AG04450 (cell line): ENCODE measurements at regions of chr11 and their contacts with region 1.

Region 1: GRCh38 chr11:112588252-112588694 is 327.6 kb upstream of the PLET1 start:
- DNase-seq: peak; percentile 54
- H3K4me3 ChIP-seq: no peak overlapping the region
- H3K27ac ChIP-seq: no peak overlapping the region
- H3K27me3 ChIP-seq: no peaks in the 10 kb centered on the region
- CTCF ChIP-seq: peak; percentile 67

Region 2: GRCh38 chr11:112289588-112290492 is 298.4 kb before region 1 on chr11:
- CTCF ChIA-PET with region 1: interaction called, 16 read pairs
- POLR2A ChIA-PET with region 1: no interaction called
- DNase-seq: no peak
- H3K4me3 ChIP-seq: peak overlapping the region; percentile 78
- H3K27ac ChIP-seq: no peak overlapping the region
- H3K27me3 ChIP-seq: no peaks in the 10 kb centered on the region
- CTCF ChIP-seq: peak; percentile 65

Region 3: GRCh38 chr11:112555491-112556364 is 32.5 kb before region 1 on chr11:
- CTCF ChIA-PET with region 1: interaction called, 21 read pairs
- POLR2A ChIA-PET with region 1: no interaction called
- DNase-seq: no peak
- H3K4me3 ChIP-seq: no peak overlapping the region
- H3K27ac ChIP-seq: peak overlapping the region; percentile 11
- H3K27me3 ChIP-seq: peaks cover 2% of the 10 kb centered on the region
- CTCF ChIP-seq: peak; percentile 78

Region 4: DNA sequence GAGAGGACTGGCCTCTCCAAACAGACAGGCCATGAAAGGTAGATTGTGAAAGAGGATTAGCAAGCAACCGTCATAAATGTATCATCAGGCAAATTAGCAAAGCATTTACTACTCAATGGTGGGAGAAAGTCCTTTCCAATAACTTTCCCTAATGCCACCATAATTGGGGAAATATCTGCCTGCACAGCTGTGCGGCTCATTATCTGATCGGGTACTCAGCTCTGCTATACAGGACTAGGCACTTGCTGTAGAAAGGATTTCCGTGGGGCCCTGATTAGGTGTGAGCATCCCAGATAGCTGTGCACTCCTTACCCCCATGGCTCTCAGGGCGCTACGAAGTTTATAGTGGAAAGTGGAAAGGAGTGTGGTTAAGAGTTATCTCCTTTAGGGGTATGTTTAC is 17.9 kb before region 1 on chr11:
- CTCF ChIA-PET with region 1: interaction called, 26 read pairs
- POLR2A ChIA-PET with region 1: no interaction called
- DNase-seq: no peak
- H3K4me3 ChIP-seq: no peak overlapping the region
- H3K27ac ChIP-seq: no peak overlapping the region
- H3K27me3 ChIP-seq: peaks cover 15% of the 10 kb centered on the region
- CTCF ChIP-seq: no peak

Region 5: DNA sequence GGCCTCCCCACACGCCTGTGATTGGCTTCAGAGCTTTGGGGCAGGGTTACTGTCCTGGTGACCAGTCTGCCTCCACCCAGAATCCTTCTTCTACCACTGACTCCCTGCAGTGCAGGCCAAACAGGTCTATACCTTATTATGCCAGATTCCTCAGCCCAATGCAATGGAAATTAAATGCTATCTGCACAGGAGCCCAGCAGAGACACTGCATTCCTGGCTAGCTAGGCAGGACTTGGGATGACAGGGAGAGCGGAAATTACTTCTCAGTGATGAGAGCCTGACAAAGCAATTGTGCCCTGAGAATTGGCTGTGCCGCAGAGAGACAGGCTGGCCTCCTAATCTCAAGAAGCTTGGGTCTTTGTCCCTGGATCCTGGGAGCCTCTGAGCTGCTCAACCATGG is 229.1 kb after region 1 on chr11:
- CTCF ChIA-PET with region 1: no interaction called
- POLR2A ChIA-PET with region 1: no interaction called
- DNase-seq: no peak
- H3K4me3 ChIP-seq: no peak overlapping the region
- H3K27ac ChIP-seq: no peak overlapping the region
- H3K27me3 ChIP-seq: no peaks in the 10 kb centered on the region
- CTCF ChIP-seq: no peak

Region 6: DNA sequence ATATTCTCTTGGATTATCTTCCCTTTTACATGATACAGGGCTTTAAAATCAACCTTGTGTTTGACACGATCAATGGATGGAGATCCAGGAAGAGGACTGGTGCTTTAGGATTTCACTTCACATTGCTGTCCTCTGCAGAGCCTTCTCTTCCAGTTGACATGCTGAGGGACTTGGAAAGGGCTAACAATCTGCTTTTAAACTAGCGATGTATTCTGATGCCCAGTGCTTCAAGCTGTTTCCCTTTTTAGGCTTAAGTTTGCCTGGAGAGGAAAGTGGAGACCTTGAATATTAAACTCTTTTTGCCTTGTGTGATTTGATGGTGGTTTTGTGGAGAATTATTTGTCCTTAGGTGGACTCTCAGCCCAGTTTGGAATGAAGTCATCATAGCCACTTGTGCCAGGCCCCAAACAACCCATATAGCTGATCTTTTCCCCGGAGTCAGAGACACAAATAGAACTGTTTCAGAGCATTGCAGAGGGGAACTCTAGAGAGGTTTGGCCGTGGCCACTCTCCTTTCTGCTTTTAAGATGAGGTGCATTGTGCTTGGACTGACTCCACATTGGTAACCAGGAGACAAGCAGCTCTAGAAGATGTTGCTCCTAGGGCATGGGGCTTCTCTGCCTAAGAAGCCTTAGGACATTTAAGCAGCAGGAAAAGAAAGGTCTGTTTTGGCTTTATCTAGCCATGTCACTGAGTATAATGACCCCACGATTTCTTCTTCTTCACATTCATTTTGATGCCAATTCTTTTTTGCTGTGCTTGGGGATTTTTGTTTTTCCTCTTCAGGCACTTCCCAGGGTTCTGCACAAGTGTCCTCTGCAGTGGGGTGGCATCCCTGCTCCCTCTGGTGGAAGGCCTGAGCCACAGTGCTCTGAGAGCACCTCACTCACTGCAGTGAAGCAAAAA is 525.8 kb after region 1 on chr11:
- CTCF ChIA-PET with region 1: interaction called, 16 read pairs
- POLR2A ChIA-PET with region 1: no interaction called
- DNase-seq: no peak
- H3K4me3 ChIP-seq: no peak overlapping the region
- H3K27ac ChIP-seq: no peak overlapping the region
- H3K27me3 ChIP-seq: no peaks in the 10 kb centered on the region
- CTCF ChIP-seq: peak; percentile 59